ENCODE measurements at regions of chr12 and their contacts with region 1.

Region 1: GRCh38 chr12:89663577-89664357 is 44.9 kb downstream of the ATP2B1 start:
- DNase-seq: no peak
- ATAC-seq: peak in 1 of 8 donors; percentile 13
- H3K4me3 ChIP-seq: no peak overlapping the region
- H3K27ac ChIP-seq: no peak overlapping the region
- H3K4me1 ChIP-seq: peaks cover 3 to 52% (median 42%) of the 10 kb centered on the region in 9 donors
- H3K27me3 ChIP-seq: no peaks in the 10 kb centered on the region
- CTCF ChIP-seq: no peak

Region 2: GRCh38 chr12:89674326-89674942 is 10.7 kb after region 1 on chr12:
- intact Hi-C with region 1: loop called in 1 of 10 experiments (anchors 1 kb)
- DNase-seq: no peak
- ATAC-seq: no peak
- H3K4me3 ChIP-seq: no peak overlapping the region
- H3K27ac ChIP-seq: no peak overlapping the region
- H3K4me1 ChIP-seq: peaks cover 0 to 25% (median 3%) of the 10 kb centered on the region in 9 donors
- H3K27me3 ChIP-seq: no peaks in the 10 kb centered on the region
- CTCF ChIP-seq: no peak

Measured in heart right ventricle (tissue), 16 donors.